ENCODE measurements at regions of chr1 and their contacts with region 1.

Region 1: DNA sequence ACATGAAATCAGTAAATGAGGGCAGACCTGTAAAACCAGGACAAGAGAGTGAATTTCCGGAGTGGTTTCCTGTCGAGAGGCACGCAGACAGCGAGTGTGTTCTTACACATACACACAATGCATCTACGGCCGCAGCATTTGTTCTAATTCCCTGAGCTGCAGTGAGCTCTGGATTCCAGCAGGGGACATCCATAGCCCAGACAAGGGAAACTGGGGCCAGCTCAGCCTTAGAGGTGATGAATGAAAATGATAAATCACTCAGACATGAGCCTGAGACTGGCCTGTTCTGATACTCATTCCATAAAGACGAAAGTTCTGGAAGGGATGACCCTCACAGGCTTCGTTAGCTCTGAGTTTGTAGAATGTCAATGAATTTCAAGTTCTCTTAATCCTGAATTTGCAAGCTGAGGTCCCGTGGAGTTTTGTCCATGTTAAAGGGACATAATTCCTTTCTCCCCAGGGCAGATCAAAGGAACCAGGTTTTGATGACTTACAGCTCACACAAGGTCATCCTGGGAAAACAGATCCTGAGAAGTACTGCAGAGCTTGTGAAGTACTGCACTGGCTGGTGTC is 207.9 kb upstream of the C1orf87 start:
- DNase-seq: peak; percentile 66 to 75
- ATAC-seq: peak; percentile 91
- H3K4me3 ChIP-seq: no peak overlapping the region
- H3K27ac ChIP-seq: no peak overlapping the region
- H3K4me1 ChIP-seq: peaks cover 0 to 6% of the 10 kb centered on the region in 2 donors
- H3K27me3 ChIP-seq: no peaks in the 10 kb centered on the region

Region 2: GRCh38 chr1:59971464-59971911 is 310.0 kb before region 1 on chr1:
- intact Hi-C with region 1: loop called in 1 of 2 experiments (anchors 5 kb)
- DNase-seq: peak; percentile 78 to 91
- ATAC-seq: peak; percentile 87
- H3K4me3 ChIP-seq: no peak overlapping the region
- H3K27ac ChIP-seq: no peak overlapping the region
- H3K4me1 ChIP-seq: no peaks in the 10 kb centered on the region
- H3K27me3 ChIP-seq: no peaks in the 10 kb centered on the region

Region 3: DNA sequence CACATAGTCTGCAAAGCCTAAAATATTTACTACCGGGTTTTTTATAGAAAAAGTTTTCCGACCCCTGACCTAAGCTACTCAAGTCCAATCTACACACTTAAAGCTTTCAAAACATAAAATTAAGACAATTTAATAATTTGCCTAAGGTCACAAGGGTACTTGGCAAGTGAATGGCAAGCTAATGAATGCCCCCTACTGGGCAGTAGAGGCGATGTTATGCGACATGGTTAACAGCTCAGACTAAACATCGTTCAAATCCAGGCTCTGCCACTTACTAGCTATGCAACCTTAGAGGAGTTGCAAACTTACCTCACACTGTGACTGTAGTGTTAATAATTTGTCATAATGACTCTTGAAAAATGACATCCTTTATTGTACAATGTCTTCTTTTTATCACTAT is 483.8 kb after region 1 on chr1:
- intact Hi-C with region 1: loop called (anchors 10 kb)
- DNase-seq: no peak
- ATAC-seq: no peak
- H3K4me3 ChIP-seq: no peak overlapping the region
- H3K27ac ChIP-seq: no peak overlapping the region
- H3K4me1 ChIP-seq: peaks cover 2 to 8% of the 10 kb centered on the region in 2 donors
- H3K27me3 ChIP-seq: no peaks in the 10 kb centered on the region

Region 4: GRCh38 chr1:60969971-60970509 is 688.6 kb after region 1 on chr1:
- intact Hi-C with region 1: loop called in 1 of 2 experiments (anchors 10 kb)
- DNase-seq: no peak
- ATAC-seq: peak; percentile 78
- H3K4me3 ChIP-seq: no peak overlapping the region
- H3K27ac ChIP-seq: peak overlapping the region; percentile 49 to 74
- H3K4me1 ChIP-seq: peaks cover 6 to 12% of the 10 kb centered on the region in 2 donors
- H3K27me3 ChIP-seq: no peaks in the 10 kb centered on the region